A673 (cell line): ENCODE measurements at regions of chr1 and their contacts with region 1.

Region 1: DNA sequence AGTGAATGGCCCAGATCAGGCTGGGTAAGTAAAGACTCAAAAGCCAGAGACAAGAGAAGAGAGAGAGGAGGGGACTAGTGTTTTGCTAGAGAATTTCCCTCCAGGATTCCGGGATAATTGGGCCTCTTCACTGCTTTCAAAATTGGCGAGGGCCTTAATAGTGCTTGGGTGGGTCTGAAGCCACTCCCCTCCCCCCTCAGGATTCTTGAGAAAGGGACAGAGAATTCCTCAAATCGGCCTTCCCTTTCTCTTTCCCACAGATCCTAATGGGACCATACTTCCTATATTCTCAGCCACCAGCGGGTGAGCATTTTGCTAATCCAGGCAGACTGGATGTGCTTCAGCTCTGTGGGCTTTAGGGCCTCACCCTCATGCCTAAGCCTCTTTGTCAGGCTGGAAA is 11.9 kb downstream of the SFN start:
- DNase-seq: no peak
- H3K4me3 ChIP-seq: no peak overlapping the region
- H3K27ac ChIP-seq: no peak overlapping the region
- H3K4me1 ChIP-seq: no peaks in the 10 kb centered on the region
- H3K27me3 ChIP-seq: no peaks in the 10 kb centered on the region
- CTCF ChIP-seq: no peak

Region 2: DNA sequence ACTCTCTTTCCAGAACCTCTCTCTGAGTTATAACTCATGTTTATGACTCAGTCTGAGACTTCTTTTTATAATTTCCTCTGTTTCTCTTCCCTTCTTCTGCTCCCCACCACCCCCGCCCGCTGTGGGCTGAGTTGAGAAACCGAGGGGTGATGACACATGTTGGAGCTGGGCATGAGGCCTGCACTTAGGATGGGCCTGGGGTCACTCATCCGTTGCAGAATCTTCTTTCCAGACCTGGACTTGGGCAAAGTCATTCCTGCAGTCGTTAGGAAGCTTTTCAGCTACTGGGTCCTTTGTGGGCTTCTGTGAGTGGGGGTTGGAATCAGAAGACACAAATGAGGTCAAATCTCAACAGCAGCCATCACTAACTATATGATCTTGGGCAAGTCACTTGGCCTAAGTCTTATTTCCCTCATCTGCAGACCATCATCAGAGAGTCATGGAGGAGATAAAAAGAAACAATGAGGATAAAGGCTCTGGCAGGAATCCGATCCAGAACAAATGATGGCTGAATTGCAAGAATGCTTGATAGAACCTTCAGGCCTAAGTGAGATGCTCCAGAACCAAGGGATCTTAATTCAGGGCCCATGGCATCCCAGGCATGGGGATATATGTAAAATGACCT is 291.9 kb before region 1 on chr1:
- CTCF ChIA-PET with region 1: no interaction called
- POLR2A ChIA-PET with region 1: no interaction called
- intact Hi-C with region 1: no loop called
- DNase-seq: no peak
- H3K4me3 ChIP-seq: no peak overlapping the region
- H3K27ac ChIP-seq: no peak overlapping the region
- H3K4me1 ChIP-seq: no peaks in the 10 kb centered on the region
- H3K27me3 ChIP-seq: no peaks in the 10 kb centered on the region
- CTCF ChIP-seq: no peak

Region 3: GRCh38 chr1:26811057-26811456 is 63.8 kb before region 1 on chr1:
- CTCF ChIA-PET with region 1: no interaction called
- POLR2A ChIA-PET with region 1: no interaction called
- intact Hi-C with region 1: loop called (anchors 5 kb)
- DNase-seq: no peak
- H3K4me3 ChIP-seq: no peak overlapping the region
- H3K27ac ChIP-seq: no peak overlapping the region
- H3K4me1 ChIP-seq: no peaks in the 10 kb centered on the region
- H3K27me3 ChIP-seq: no peaks in the 10 kb centered on the region
- CTCF ChIP-seq: no peak